ENCODE measurements at regions of chr1 and their contacts with region 1.

Region 1: GRCh38 chr1:225772323-225772768 is 5.3 kb upstream of the SRP9 start:
- DNase-seq: peak; percentile 99
- ATAC-seq: peak; percentile 87
- H3K4me3 ChIP-seq: peak overlapping the region; percentile 52
- H3K27ac ChIP-seq: peak overlapping the region; percentile 87
- H3K4me1 ChIP-seq: peaks cover 50% of the 10 kb centered on the region
- H3K27me3 ChIP-seq: no peaks in the 10 kb centered on the region
- CTCF ChIP-seq: peak; percentile 98

Region 2: GRCh38 chr1:225474986-225475820 is 297.1 kb before region 1 on chr1:
- CTCF ChIA-PET with region 1: interaction called, 5 read pairs
- POLR2A ChIA-PET with region 1: no interaction called
- intact Hi-C with region 1: loop called (anchors 1 kb)
- DNase-seq: peak; percentile 82
- ATAC-seq: peak; percentile 90
- H3K4me3 ChIP-seq: no peak overlapping the region; the same call in 1 of the 2 replicates
- H3K27ac ChIP-seq: no peak overlapping the region
- H3K4me1 ChIP-seq: peaks cover 10% of the 10 kb centered on the region; the same call in 1 of the 2 replicates
- H3K27me3 ChIP-seq: no peaks in the 10 kb centered on the region
- CTCF ChIP-seq: peak; percentile 100

Region 3: DNA sequence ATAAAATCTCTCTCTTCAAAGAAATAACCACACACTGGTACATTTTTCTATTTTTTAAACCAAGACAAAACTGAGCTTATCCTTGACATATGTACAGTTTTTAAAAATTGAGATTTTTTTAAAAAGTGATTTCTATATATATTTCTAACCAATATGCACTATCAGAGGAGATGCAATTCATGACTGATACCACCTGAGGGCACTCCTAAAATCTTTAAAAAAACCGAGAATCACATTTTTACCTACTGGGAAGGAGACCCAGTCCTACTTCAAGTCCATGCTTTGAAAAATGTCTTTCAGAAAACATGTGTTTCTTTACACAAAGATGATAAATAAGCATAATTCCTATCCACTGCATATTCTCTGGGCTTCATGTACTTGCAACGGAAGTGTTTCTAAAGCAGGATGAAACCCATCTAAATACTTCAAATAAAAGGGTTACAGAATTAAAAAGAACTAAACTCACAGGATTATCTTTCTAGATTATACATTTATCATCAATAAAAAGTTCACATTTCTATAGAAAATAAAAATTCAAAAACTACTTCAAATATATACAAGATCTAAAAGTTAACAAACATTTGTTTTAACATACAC is 218.0 kb before region 1 on chr1:
- CTCF ChIA-PET with region 1: interaction called, 4 read pairs
- POLR2A ChIA-PET with region 1: no interaction called
- intact Hi-C with region 1: loop called (anchors 1 kb)
- DNase-seq: peak; percentile 79
- ATAC-seq: peak; percentile 61; the same call in 1 of the 2 replicates
- H3K4me3 ChIP-seq: no peak overlapping the region
- H3K27ac ChIP-seq: no peak overlapping the region
- H3K4me1 ChIP-seq: no peaks in the 10 kb centered on the region
- H3K27me3 ChIP-seq: no peaks in the 10 kb centered on the region
- CTCF ChIP-seq: peak; percentile 81

Region 4: GRCh38 chr1:225700164-225700740 is 72.1 kb before region 1 on chr1:
- CTCF ChIA-PET with region 1: interaction called, 21 read pairs
- POLR2A ChIA-PET with region 1: interaction called, 17 read pairs
- intact Hi-C with region 1: loop called (anchors 1 kb)
- DNase-seq: peak; percentile 99
- ATAC-seq: peak; percentile 87
- H3K4me3 ChIP-seq: peak overlapping the region; percentile 48
- H3K27ac ChIP-seq: peak overlapping the region; percentile 80
- H3K4me1 ChIP-seq: peaks cover 37% of the 10 kb centered on the region
- H3K27me3 ChIP-seq: no peaks in the 10 kb centered on the region
- CTCF ChIP-seq: no peak

Region 5: DNA sequence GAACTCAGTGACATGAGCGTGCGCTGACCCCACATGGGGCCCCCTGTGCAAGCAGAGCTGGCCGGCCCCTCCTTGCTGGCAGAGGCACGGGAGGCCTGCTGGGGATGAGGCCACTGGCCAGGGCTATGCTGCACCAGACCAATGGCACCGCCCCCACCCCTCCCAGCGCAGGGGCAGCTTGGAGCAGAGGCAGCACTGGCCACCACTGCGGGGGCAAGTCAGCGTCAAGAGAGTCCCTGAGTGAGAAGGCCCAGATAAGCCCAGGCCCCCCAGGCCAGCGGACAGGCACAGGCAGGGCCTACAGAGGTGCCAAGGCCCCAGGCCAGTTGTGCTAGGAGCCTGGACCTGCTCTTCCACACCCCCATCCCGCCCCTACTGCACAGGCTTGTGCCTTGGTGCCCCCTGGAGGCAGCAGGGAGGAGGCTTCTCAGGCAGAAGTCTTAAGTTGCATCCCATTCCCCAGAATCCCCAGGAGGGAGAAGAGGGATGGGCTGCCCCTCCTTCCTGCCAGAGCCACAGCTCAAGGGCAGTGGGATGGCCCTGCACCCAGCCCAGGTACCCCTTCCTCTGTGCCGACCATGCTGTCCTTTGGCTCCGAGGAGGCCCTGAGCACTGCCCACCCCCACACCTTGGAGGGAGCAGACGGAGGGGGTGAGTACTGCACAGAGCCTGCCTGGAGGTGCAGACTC is 73.4 kb after region 1 on chr1:
- CTCF ChIA-PET with region 1: interaction called, 5 read pairs
- POLR2A ChIA-PET with region 1: no interaction called
- intact Hi-C with region 1: loop called (anchors 1 kb)
- DNase-seq: peak; percentile 86
- ATAC-seq: peak; percentile 81
- H3K4me3 ChIP-seq: no peak overlapping the region
- H3K27ac ChIP-seq: no peak overlapping the region
- H3K4me1 ChIP-seq: no peaks in the 10 kb centered on the region
- H3K27me3 ChIP-seq: no peaks in the 10 kb centered on the region
- CTCF ChIP-seq: peak; percentile 92

Region 6: GRCh38 chr1:225923692-225924555 is 151.6 kb after region 1 on chr1 and contains the start of gene PYCR2:
- CTCF ChIA-PET with region 1: no interaction called
- POLR2A ChIA-PET with region 1: no interaction called
- intact Hi-C with region 1: no loop called
- DNase-seq: peak; percentile 99
- ATAC-seq: peak; percentile 91
- H3K4me3 ChIP-seq: peak within 1 kb of the TSS; percentile 89
- H3K27ac ChIP-seq: peak within 1 kb of the TSS; percentile 72
- H3K4me1 ChIP-seq: peaks cover 46% of the 10 kb centered on the region
- H3K27me3 ChIP-seq: no peaks in the 10 kb centered on the region
- CTCF ChIP-seq: no peak
- total RNA-seq, gene PYCR2: 57.7 and 69.0 TPM in 2 replicates

Region 7: GRCh38 chr1:225977937-225978748 is 205.8 kb after region 1 on chr1:
- CTCF ChIA-PET with region 1: no interaction called
- POLR2A ChIA-PET with region 1: no interaction called
- intact Hi-C with region 1: loop called (anchors 1 kb)
- DNase-seq: no peak
- ATAC-seq: no peak
- H3K4me3 ChIP-seq: no peak overlapping the region
- H3K27ac ChIP-seq: no peak overlapping the region
- H3K4me1 ChIP-seq: peaks cover 2% of the 10 kb centered on the region; the same call in 1 of the 2 replicates
- H3K27me3 ChIP-seq: no peaks in the 10 kb centered on the region
- CTCF ChIP-seq: no peak